CD4-positive, alpha-beta memory T cell (primary cell): ENCODE measurements at regions of chr14 and their contacts with region 1.

Region 1: GRCh38 chr14:104078031-104078455 is 7.5 kb upstream of the ASPG start:
- DNase-seq: peak; percentile 83 to 85 (median 84)
- H3K4me3 ChIP-seq: no peak overlapping the region
- H3K4me3 Mint-ChIP-seq: peak overlapping the region; percentile 42 to 79 (median 56)
- H3K27ac ChIP-seq: no peak overlapping the region
- H3K27ac Mint-ChIP-seq: peak overlapping the region; percentile 16 to 85 (median 74)
- H3K4me1 ChIP-seq: peaks cover 21% of the 10 kb centered on the region
- H3K4me1 Mint-ChIP-seq: peaks cover 14 to 25% (median 19%) of the 10 kb centered on the region in 4 donors
- H3K27me3 ChIP-seq: no peaks in the 10 kb centered on the region
- H3K27me3 Mint-ChIP-seq: peaks cover 0 to 1% of the 10 kb centered on the region in 2 donors

Region 2: GRCh38 chr14:104094709-104095438 is 16.8 kb after region 1 on chr14:
- CTCF ChIA-PET with region 1: interaction called, 31 read pairs
- POLR2A ChIA-PET with region 1: interaction called, 3 read pairs
- intact Hi-C with region 1: no loop called
- DNase-seq: peak; percentile 59 to 69 (median 63)
- H3K4me3 ChIP-seq: no peak overlapping the region
- H3K4me3 Mint-ChIP-seq: peak overlapping the region in 1 of 8 donors; percentile 10
- H3K27ac ChIP-seq: no peak overlapping the region
- H3K27ac Mint-ChIP-seq: no peak overlapping the region
- H3K4me1 ChIP-seq: peaks cover 8% of the 10 kb centered on the region
- H3K4me1 Mint-ChIP-seq: peaks cover 4 to 5% (median 4%) of the 10 kb centered on the region in 4 donors
- H3K27me3 ChIP-seq: no peaks in the 10 kb centered on the region
- H3K27me3 Mint-ChIP-seq: peaks cover 0 to 3% of the 10 kb centered on the region in 2 donors

Region 3: DNA sequence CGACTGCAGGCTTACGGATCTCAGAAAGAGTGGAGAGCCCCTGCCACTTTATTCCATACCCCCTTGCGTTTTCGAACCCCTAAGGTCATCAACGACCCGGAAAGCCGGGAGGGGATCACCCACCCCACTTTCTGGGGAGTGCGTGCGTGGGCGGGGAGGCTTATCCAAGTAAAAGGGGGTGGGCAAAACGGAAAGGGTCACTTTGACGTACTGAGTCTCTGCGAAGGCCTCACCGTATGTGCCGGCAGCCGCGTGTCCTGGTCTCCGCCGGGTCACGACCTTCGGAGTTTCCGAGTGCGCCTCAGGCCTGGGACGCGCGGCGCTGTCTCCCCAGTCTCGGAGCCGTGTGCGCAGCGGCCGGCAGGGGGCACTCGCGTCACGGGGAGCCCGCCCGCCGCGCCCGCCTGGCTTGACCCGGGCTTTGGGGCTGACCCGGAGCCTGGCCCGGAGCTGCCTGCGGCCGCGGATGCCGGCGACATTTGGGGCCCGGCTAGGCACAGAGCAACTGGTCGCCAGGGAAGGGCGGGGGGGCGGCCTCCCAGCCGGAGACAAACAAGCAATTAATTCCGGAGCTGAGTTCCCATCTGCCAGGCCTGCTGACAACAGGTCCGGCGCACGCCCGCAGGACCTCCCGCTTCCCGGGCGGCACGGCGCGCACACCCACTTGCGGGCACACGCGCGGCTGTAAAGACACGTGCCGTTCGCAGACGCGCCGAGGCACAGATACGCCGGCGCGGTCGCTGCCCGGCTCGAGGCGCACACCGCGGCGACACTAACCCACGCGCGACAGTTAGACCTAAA is 59.5 kb after region 1 on chr14:
- CTCF ChIA-PET with region 1: interaction called, 5 read pairs
- POLR2A ChIA-PET with region 1: no interaction called
- intact Hi-C with region 1: loop called (anchors 1 kb)
- DNase-seq: peak in 4 of 5 donors; percentile 43 to 60 (median 52)
- H3K4me3 ChIP-seq: peak overlapping the region in 1 of 2 donors; percentile 24
- H3K4me3 Mint-ChIP-seq: peak overlapping the region; percentile 36 to 70 (median 64)
- H3K27ac ChIP-seq: no peak overlapping the region
- H3K27ac Mint-ChIP-seq: peak overlapping the region in 2 of 7 donors; percentile 15 to 57
- H3K4me1 ChIP-seq: peaks cover 15% of the 10 kb centered on the region
- H3K4me1 Mint-ChIP-seq: peaks cover 2 to 9% (median 5%) of the 10 kb centered on the region in 4 donors
- H3K27me3 ChIP-seq: peaks cover 13% of the 10 kb centered on the region
- H3K27me3 Mint-ChIP-seq: peaks cover 23 to 25% of the 10 kb centered on the region in 2 donors

Region 4: DNA sequence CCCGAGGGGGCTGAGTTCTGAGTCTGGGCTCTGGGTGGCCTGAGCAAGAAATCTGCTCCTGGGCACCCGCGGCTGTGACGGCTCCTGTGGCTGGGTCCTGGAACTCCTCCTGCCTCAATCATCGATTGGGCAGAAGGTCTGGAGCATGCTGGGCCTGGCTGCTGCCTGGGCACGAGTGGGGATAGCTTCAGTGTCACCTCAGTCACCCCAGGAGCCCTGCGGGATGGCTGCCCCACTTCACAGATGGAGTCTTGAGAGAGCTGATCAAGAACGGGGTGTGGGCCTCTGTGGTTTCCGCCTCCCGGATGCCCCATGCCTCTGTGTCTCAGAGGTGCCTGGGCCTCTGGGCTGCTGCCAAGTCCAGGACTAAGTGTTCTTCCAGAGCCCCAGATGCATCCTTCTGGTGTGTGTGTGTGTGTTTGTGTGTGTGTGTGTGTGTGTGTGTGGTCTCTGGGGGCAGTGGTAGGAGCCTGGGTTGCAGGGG is 315.9 kb after region 1 on chr14:
- CTCF ChIA-PET with region 1: interaction called, 10 read pairs
- POLR2A ChIA-PET with region 1: no interaction called
- intact Hi-C with region 1: loop called (anchors 5 kb)
- DNase-seq: peak; percentile 83 to 88 (median 86)
- H3K4me3 ChIP-seq: peak overlapping the region in 1 of 2 donors; percentile 44
- H3K4me3 Mint-ChIP-seq: peak overlapping the region; percentile 62 to 95 (median 90)
- H3K27ac ChIP-seq: peak overlapping the region; percentile 52
- H3K27ac Mint-ChIP-seq: peak overlapping the region; percentile 90 to 98 (median 95)
- H3K4me1 ChIP-seq: peaks cover 83% of the 10 kb centered on the region
- H3K4me1 Mint-ChIP-seq: peaks cover 40 to 96% (median 67%) of the 10 kb centered on the region in 4 donors
- H3K27me3 ChIP-seq: no peaks in the 10 kb centered on the region
- H3K27me3 Mint-ChIP-seq: no peaks in the 10 kb centered on the region

Region 5: DNA sequence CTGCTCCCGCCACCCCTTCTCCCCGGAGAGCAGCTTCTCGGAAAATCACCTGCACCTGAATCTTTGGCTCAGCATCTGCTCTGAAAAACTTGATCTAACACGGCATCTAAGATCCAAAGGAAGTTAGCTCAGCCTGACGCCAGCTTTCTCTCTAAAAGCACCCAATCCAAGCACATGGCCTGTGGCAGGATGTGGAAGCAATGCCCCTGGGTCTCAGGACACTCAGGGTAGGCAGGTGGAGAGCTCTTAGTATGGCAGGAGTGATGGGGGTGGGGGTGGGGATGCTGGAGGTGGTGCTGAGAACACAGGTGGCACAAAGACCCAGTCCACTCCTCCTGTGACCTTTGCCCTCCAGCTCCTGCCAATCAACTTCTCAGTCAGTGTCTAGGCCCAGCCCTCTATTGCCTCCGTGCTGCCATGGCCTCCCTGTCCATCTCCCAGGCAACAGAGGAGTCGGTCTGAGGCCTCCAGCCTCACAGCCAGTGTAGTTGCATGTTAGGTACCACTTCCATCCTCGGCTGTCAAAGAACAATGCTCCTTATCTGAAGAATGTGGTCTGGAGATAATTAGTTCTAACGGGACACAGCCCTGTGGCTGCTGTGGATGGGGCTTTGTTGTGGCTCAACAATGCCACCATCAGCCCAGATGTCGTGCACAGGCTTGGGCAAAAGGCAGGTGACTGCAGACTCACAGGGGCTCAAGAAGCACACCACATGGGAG is 321.5 kb after region 1 on chr14:
- CTCF ChIA-PET with region 1: interaction called, 8 read pairs
- POLR2A ChIA-PET with region 1: no interaction called
- intact Hi-C with region 1: loop called (anchors 5 kb)
- DNase-seq: peak in 4 of 5 donors; percentile 47 to 57 (median 52)
- H3K4me3 ChIP-seq: no peak overlapping the region
- H3K4me3 Mint-ChIP-seq: peak overlapping the region in 6 of 8 donors; percentile 4 to 51 (median 29)
- H3K27ac ChIP-seq: no peak overlapping the region
- H3K27ac Mint-ChIP-seq: peak overlapping the region; percentile 77 to 92 (median 88)
- H3K4me1 ChIP-seq: peaks cover 42% of the 10 kb centered on the region
- H3K4me1 Mint-ChIP-seq: peaks cover 24 to 53% (median 37%) of the 10 kb centered on the region in 4 donors
- H3K27me3 ChIP-seq: no peaks in the 10 kb centered on the region
- H3K27me3 Mint-ChIP-seq: no peaks in the 10 kb centered on the region

Region 6: GRCh38 chr14:104563742-104564615 is 485.9 kb after region 1 on chr14:
- CTCF ChIA-PET with region 1: interaction called, 29 read pairs
- POLR2A ChIA-PET with region 1: interaction called, 3 read pairs
- intact Hi-C with region 1: no loop called
- DNase-seq: peak; percentile 57 to 64 (median 60)
- H3K4me3 ChIP-seq: no peak overlapping the region
- H3K4me3 Mint-ChIP-seq: peak overlapping the region in 1 of 8 donors; percentile 45
- H3K27ac ChIP-seq: no peak overlapping the region
- H3K27ac Mint-ChIP-seq: no peak overlapping the region
- H3K4me1 ChIP-seq: no peaks in the 10 kb centered on the region
- H3K4me1 Mint-ChIP-seq: peaks cover 0 to 2% (median 0%) of the 10 kb centered on the region in 4 donors
- H3K27me3 ChIP-seq: no peaks in the 10 kb centered on the region
- H3K27me3 Mint-ChIP-seq: peaks cover 12 to 14% of the 10 kb centered on the region in 2 donors